Ovary (tissue), 10 donors: ENCODE measurements at regions of chr18 and their contacts with region 1.

Region 1: GRCh38 chr18:65235966-65236624 is 514.7 kb upstream of the CDH7 start:
- DNase-seq: peak in 1 of 5 donors; percentile 7
- H3K4me3 ChIP-seq: no peak overlapping the region
- H3K27ac ChIP-seq: no peak overlapping the region
- H3K4me1 ChIP-seq: no peaks in the 10 kb centered on the region
- H3K27me3 ChIP-seq: no peaks in the 10 kb centered on the region
- CTCF ChIP-seq: no peak
- EP300 ChIP-seq: no peak
- POLR2A ChIP-seq: no peak

Region 2: DNA sequence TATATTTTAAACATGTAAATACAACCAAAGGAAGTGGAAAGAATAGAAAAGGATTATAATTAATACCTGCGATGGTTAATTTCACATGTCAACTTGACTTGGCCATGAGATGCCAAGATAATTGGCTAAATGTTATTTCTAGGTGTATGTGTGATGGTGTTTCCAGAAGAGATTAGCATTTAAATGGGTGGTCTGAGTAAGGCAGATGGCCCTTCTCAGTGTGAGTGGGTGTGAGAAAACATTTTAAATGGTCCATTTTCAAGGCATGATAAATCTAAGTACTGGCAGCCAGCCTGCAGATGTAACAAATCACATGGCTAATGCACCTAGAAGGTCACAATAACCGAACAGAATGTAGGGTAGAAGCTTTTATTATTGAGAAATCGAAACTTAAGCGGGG is 415.1 kb after region 1 on chr18:
- intact Hi-C with region 1: loop called in 1 of 4 experiments (anchors 5 kb)
- DNase-seq: no peak
- H3K4me3 ChIP-seq: no peak overlapping the region
- H3K27ac ChIP-seq: no peak overlapping the region
- H3K4me1 ChIP-seq: no peaks in the 10 kb centered on the region
- H3K27me3 ChIP-seq: no peaks in the 10 kb centered on the region
- CTCF ChIP-seq: no peak
- EP300 ChIP-seq: no peak
- POLR2A ChIP-seq: no peak

Region 3: DNA sequence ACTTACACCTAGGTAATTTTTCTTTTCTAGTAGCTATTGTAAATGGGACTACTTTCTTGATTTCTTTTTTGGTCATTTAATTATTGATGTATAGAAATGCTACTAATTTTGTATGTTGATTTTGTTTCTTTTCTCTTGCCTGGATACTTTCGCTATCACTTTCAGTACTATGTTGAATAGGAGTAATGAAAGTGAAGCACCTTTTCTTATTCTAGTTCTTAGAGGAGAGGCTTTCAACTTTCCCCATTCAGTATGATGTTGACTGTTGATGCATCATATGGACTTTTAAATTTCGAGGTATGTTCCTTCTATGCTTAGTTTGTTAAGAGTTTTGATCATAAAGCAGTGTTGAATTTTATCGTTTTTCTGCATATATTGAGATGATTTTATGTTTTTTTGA is 1225.2 kb after region 1 on chr18:
- intact Hi-C with region 1: no loop called
- DNase-seq: no peak
- H3K4me3 ChIP-seq: no peak overlapping the region
- H3K27ac ChIP-seq: no peak overlapping the region
- H3K4me1 ChIP-seq: no peaks in the 10 kb centered on the region
- H3K27me3 ChIP-seq: no peaks in the 10 kb centered on the region
- CTCF ChIP-seq: no peak
- EP300 ChIP-seq: no peak
- POLR2A ChIP-seq: no peak